ENCODE measurements at regions of chr14 and their contacts with region 1.

Region 1: GRCh38 chr14:72104011-72104613 is 171.9 kb downstream of the RGS6 start:
- DNase-seq: no peak
- ATAC-seq: peak; percentile 75
- H3K4me3 ChIP-seq: no peak overlapping the region
- H3K27ac ChIP-seq: no peak overlapping the region
- H3K4me1 ChIP-seq: no peaks in the 10 kb centered on the region
- H3K27me3 ChIP-seq: no peaks in the 10 kb centered on the region
- CTCF ChIP-seq: peak; percentile 59 to 72 (median 66)
- EP300 ChIP-seq: no peak
- POLR2A ChIP-seq: no peak
- RAD21 ChIP-seq: peak; percentile 64

Region 2: DNA sequence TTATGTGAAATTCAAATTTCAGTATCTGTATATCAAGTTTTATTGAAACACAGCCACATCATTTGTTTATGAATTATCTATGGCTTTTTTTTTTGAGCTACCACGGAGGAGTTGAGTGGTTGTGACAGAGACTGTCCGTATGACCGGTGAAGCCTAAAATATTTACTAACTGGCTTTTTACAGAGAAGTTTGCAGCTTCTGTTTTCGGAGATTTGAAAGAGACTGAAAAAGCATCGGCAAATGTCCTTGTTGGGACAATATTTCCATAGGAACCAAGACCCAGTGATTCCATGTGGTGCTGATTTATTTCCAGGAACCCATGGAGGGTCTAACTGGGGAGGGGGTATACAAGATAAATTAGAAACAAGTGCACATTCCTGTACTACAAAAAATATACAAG is 115.6 kb before region 1 on chr14:
- CTCF ChIA-PET with region 1: no interaction called
- POLR2A ChIA-PET with region 1: no interaction called
- RAD21 ChIA-PET with region 1: no interaction called
- SMC1A ChIA-PET with region 1: no interaction called
- in situ Hi-C with region 1: no loop called
- intact Hi-C with region 1: no loop called
- DNase-seq: no peak
- ATAC-seq: no peak
- H3K4me3 ChIP-seq: no peak overlapping the region
- H3K27ac ChIP-seq: no peak overlapping the region
- H3K4me1 ChIP-seq: no peaks in the 10 kb centered on the region
- H3K27me3 ChIP-seq: no peaks in the 10 kb centered on the region
- CTCF ChIP-seq: no peak
- EP300 ChIP-seq: no peak
- POLR2A ChIP-seq: no peak
- RAD21 ChIP-seq: no peak

Region 3: GRCh38 chr14:72084935-72085334 is 19.2 kb before region 1 on chr14:
- CTCF ChIA-PET with region 1: interaction called, 14 read pairs
- POLR2A ChIA-PET with region 1: no interaction called
- RAD21 ChIA-PET with region 1: no interaction called
- SMC1A ChIA-PET with region 1: interaction called, 6 read pairs
- in situ Hi-C with region 1: no loop called
- intact Hi-C with region 1: no loop called
- DNase-seq: no peak
- ATAC-seq: no peak
- H3K4me3 ChIP-seq: no peak overlapping the region
- H3K27ac ChIP-seq: no peak overlapping the region
- H3K4me1 ChIP-seq: no peaks in the 10 kb centered on the region
- H3K27me3 ChIP-seq: no peaks in the 10 kb centered on the region; a peak in 1 of 4 replicates
- CTCF ChIP-seq: no peak
- EP300 ChIP-seq: no peak
- POLR2A ChIP-seq: no peak
- RAD21 ChIP-seq: no peak

Region 4: GRCh38 chr14:72124171-72124570 is 20.1 kb after region 1 on chr14:
- CTCF ChIA-PET with region 1: interaction called, 18 read pairs
- POLR2A ChIA-PET with region 1: interaction called, 7 read pairs
- RAD21 ChIA-PET with region 1: interaction called, 5 read pairs
- SMC1A ChIA-PET with region 1: interaction called, 31 read pairs
- in situ Hi-C with region 1: no loop called
- intact Hi-C with region 1: no loop called
- DNase-seq: no peak
- ATAC-seq: peak; percentile 25
- H3K4me3 ChIP-seq: no peak overlapping the region
- H3K27ac ChIP-seq: no peak overlapping the region
- H3K4me1 ChIP-seq: no peaks in the 10 kb centered on the region
- H3K27me3 ChIP-seq: peaks cover 0 to 9% of the 10 kb centered on the region in 2 experiments; a peak in 1 of 4 replicates
- CTCF ChIP-seq: no peak
- EP300 ChIP-seq: no peak
- POLR2A ChIP-seq: no peak
- RAD21 ChIP-seq: no peak

Region 5: DNA sequence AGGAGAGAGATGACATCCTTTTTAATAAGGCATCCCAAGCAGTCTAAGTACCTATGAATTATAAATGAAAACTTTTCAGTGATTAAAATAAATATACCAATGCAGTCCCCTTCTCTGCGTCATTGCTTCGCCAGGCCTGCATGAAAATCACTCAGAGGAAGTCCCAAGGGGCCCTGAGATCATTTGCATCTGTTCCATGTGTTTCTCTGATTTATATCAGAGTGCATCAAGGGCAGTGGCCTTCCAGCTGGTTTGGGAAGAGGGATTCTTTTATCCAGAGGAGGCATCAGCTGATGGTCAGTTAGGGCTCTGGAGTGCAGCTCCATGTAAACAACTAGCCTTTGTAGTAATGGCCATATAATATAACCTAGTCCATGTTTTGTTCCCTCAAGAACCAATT is 38.2 kb after region 1 on chr14:
- CTCF ChIA-PET with region 1: interaction called, 5 read pairs
- POLR2A ChIA-PET with region 1: no interaction called
- RAD21 ChIA-PET with region 1: interaction called, 3 read pairs
- SMC1A ChIA-PET with region 1: interaction called, 13 read pairs
- in situ Hi-C with region 1: no loop called
- intact Hi-C with region 1: no loop called
- DNase-seq: no peak
- ATAC-seq: no peak; the same call in 2 of the 3 replicates
- H3K4me3 ChIP-seq: no peak overlapping the region
- H3K27ac ChIP-seq: no peak overlapping the region
- H3K4me1 ChIP-seq: no peaks in the 10 kb centered on the region
- H3K27me3 ChIP-seq: no peaks in the 10 kb centered on the region
- CTCF ChIP-seq: no peak
- EP300 ChIP-seq: no peak
- POLR2A ChIP-seq: no peak
- RAD21 ChIP-seq: no peak

Region 6: GRCh38 chr14:72291908-72292688 is 188.0 kb after region 1 on chr14:
- CTCF ChIA-PET with region 1: interaction called, 31 read pairs
- POLR2A ChIA-PET with region 1: no interaction called
- RAD21 ChIA-PET with region 1: no interaction called
- SMC1A ChIA-PET with region 1: interaction called, 6 read pairs
- in situ Hi-C with region 1: no loop called
- intact Hi-C with region 1: loop called (anchors 5 kb)
- DNase-seq: peak; percentile 31
- ATAC-seq: peak; percentile 88
- H3K4me3 ChIP-seq: no peak overlapping the region
- H3K27ac ChIP-seq: no peak overlapping the region
- H3K4me1 ChIP-seq: no peaks in the 10 kb centered on the region
- H3K27me3 ChIP-seq: no peaks in the 10 kb centered on the region
- CTCF ChIP-seq: peak; percentile 68 to 73 (median 71)
- EP300 ChIP-seq: no peak
- POLR2A ChIP-seq: no peak
- RAD21 ChIP-seq: peak; percentile 84

Region 7: GRCh38 chr14:72401632-72402376 is 297.7 kb after region 1 on chr14:
- CTCF ChIA-PET with region 1: no interaction called
- POLR2A ChIA-PET with region 1: no interaction called
- RAD21 ChIA-PET with region 1: no interaction called
- SMC1A ChIA-PET with region 1: no interaction called
- in situ Hi-C with region 1: no loop called
- intact Hi-C with region 1: no loop called
- DNase-seq: no peak
- ATAC-seq: no peak
- H3K4me3 ChIP-seq: no peak overlapping the region
- H3K27ac ChIP-seq: no peak overlapping the region
- H3K4me1 ChIP-seq: no peaks in the 10 kb centered on the region
- H3K27me3 ChIP-seq: no peaks in the 10 kb centered on the region
- CTCF ChIP-seq: no peak
- EP300 ChIP-seq: no peak
- POLR2A ChIP-seq: no peak
- RAD21 ChIP-seq: no peak